Adrenal gland (tissue), 19 donors: ENCODE measurements at regions of chr3 and their contacts with region 1.

Region 1: DNA sequence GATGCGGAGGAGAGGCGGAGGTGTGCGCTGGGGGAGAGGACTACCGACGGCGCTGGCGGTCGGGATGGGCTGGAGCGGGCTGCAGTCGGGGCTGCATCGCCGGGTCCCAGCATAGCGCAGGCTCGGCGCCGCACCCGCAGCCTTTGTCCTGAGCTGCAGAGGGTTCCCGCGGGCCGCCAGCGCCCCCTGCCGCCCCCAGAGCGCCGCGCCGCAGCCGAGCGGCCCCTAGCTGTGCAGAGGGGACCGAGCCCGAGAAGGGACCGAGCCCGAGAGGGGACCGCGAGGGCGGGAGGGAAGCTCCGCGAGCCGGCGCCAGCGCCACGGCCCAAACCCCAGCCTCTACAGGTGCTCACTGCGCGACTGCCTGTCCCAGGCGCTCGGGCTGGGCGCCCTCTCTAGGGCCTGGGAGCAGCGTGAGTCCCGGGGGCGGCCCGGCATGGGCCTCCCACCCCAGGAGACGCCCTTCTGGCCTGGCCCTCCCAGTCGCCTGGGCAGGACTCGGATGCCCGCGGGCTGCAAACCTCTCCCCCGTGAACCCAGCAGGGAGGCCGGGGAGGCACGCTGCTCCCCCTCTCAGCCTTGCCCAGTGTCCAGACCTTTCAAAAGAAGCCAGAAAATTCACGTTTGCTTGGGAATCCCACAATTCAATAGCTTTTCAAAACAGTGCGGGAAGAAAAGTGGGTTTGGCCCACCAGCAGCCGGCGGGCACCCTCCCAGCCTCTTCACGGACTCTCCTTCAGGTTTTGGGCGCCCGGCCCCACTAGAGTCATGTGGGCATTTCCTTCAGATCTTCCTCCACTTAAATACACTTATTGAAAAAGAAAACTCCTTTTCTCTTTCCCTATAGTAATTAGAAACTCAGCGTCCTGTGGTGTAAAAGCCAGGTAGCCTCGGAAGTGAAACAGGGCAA is 134.7 kb downstream of the TPRA1 start:
- DNase-seq: peak; percentile 52 to 85 (median 74)
- H3K4me3 ChIP-seq: peak overlapping the region in 1 of 4 donors; percentile 29
- H3K27ac ChIP-seq: no peak overlapping the region
- H3K4me1 ChIP-seq: peaks cover 6 to 21% of the 10 kb centered on the region in 2 donors
- H3K27me3 ChIP-seq: peaks cover 37% of the 10 kb centered on the region
- CTCF ChIP-seq: peak; percentile 54 to 96 (median 83)
- POLR2A ChIP-seq: no peak

Region 2: GRCh38 chr3:126522363-126522788 is 933.4 kb before region 1 on chr3:
- intact Hi-C with region 1: loop called (anchors 10 kb)
- DNase-seq: peak; percentile 54 to 79 (median 59)
- H3K4me3 ChIP-seq: no peak overlapping the region
- H3K27ac ChIP-seq: no peak overlapping the region
- H3K4me1 ChIP-seq: peaks cover 7 to 14% of the 10 kb centered on the region in 2 donors
- H3K27me3 ChIP-seq: peaks cover 4% of the 10 kb centered on the region
- CTCF ChIP-seq: peak; percentile 81 to 99 (median 87)
- POLR2A ChIP-seq: no peak

Region 3: GRCh38 chr3:126679318-126679751 is 776.5 kb before region 1 on chr3:
- intact Hi-C with region 1: loop called (anchors 5 to 10 kb)
- DNase-seq: peak; percentile 75 to 95 (median 85)
- H3K4me3 ChIP-seq: no peak overlapping the region
- H3K27ac ChIP-seq: peak overlapping the region in 1 of 5 donors; percentile 52
- H3K4me1 ChIP-seq: peaks cover 0 to 18% of the 10 kb centered on the region in 2 donors
- H3K27me3 ChIP-seq: no peaks in the 10 kb centered on the region
- CTCF ChIP-seq: peak; percentile 74 to 96 (median 94)
- POLR2A ChIP-seq: no peak

Region 4: GRCh38 chr3:126752303-126752842 is 703.4 kb before region 1 on chr3:
- intact Hi-C with region 1: loop called in 1 of 2 experiments (anchors 2 kb)
- DNase-seq: peak; percentile 73 to 91 (median 77)
- H3K4me3 ChIP-seq: no peak overlapping the region
- H3K27ac ChIP-seq: no peak overlapping the region
- H3K4me1 ChIP-seq: peaks cover 0 to 6% of the 10 kb centered on the region in 2 donors
- H3K27me3 ChIP-seq: no peaks in the 10 kb centered on the region
- CTCF ChIP-seq: peak; percentile 78 to 92 (median 88)
- POLR2A ChIP-seq: no peak

Region 5: DNA sequence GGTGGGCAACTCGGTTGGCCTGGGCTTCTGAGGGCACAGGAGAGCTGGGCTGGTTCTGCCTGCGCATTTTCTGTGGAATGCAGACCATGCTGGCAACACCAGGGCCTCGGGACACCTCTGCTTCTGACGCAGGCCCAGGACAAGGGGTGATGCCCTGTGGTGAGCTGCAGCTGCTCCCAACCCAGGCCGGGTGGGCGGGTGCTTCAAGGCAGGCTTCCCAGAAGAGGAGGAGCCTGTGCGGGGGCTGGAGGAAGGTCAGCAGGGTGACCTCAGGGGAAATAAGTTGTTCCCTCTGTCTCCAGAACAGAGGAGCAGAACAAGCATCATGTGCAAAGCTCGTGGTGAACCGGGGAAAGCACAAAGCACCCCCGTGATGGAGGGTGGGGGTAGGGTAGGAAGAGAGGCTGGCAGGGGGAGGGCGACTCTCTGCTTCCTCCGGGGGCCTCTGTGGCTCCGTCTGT is 483.9 kb before region 1 on chr3:
- intact Hi-C with region 1: no loop called
- DNase-seq: peak; percentile 59 to 87 (median 77)
- H3K4me3 ChIP-seq: no peak overlapping the region
- H3K27ac ChIP-seq: peak overlapping the region in 3 of 5 donors; percentile 19 to 83 (median 76)
- H3K4me1 ChIP-seq: peaks cover 0 to 8% of the 10 kb centered on the region in 2 donors
- H3K27me3 ChIP-seq: no peaks in the 10 kb centered on the region
- CTCF ChIP-seq: no peak
- POLR2A ChIP-seq: no peak

Region 6: DNA sequence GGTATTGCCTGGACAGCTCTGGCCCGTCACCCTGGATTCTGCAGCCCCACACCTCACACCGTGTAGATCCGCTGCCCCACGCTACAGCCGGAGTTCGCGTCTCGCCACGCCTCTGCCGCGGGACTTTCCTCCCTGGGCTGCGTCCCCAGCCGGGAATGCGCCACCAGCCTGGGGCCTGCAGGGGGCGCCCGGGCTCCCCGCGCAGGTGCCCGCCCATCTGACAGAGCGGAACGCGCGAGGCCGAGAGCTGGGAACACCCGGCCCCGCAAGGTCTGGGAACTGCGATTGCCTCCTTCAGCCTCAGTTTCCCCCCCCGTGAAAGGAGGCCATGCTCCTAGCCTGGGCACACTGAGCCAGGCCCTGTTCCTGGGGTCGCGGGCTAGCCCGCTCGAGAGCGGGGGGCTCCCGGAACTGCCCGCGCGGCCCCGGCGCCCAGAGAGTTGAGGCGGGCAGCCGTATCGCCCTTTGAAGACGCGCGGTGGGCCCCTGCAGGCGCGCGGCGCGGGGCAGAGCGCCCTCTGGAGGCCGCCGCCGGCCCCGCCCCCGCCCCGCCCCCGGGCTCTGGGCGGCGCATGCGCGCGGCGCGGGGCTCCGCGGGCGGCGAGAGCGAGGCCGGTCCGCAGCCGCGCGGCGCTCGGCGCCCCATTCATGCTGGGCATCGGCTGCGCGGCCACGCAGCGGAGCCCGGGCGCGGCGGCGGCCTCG is 473.2 kb before region 1 on chr3 and contains the start of gene PLXNA1:
- intact Hi-C with region 1: loop called in 1 of 2 experiments (anchors 10 kb)
- DNase-seq: peak; percentile 64 to 83 (median 70)
- H3K4me3 ChIP-seq: peak within 1 kb of the TSS; percentile 37 to 98 (median 54)
- H3K27ac ChIP-seq: peak within 1 kb of the TSS in 4 of 5 donors; percentile 62 to 89 (median 74)
- H3K4me1 ChIP-seq: peaks cover 11 to 34% of the 10 kb centered on the region in 2 donors
- H3K27me3 ChIP-seq: no peaks in the 10 kb centered on the region
- CTCF ChIP-seq: peak; percentile 76 to 91 (median 86)
- POLR2A ChIP-seq: no peak
- total RNA-seq, gene PLXNA1: 9.5 to 28.4 (median 21.5) TPM

Region 7: DNA sequence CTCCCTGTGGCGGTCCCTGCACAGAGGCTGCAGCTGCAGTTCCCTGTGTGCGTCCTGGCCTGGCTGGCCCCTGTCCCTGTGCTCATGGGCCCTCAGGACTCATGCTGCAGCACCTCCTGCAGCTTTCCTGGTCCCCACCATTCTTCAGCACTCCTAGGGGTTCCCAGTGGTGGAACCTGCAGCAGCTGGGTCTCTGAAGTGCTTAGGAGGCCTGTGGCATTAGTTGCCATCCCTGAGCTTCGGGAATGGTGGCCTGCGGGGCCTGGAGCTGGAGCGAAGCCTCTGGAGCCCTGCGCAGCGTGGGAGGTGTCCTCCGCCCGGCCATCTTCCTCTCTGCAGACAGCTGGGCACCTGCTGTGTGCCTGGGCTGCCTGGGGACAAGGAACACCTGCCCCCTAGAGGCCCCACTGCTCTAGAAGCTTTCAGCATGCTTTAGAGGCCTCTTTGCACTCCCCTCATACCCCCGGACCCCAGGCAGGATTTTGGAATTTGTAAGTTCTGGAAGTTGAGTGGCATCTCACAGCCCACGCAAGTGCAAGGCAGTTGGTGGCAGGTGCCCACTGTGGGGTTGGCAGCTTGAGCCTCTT is 459.8 kb before region 1 on chr3:
- intact Hi-C with region 1: loop called in 1 of 2 experiments (anchors 10 kb)
- DNase-seq: no peak
- H3K4me3 ChIP-seq: no peak overlapping the region
- H3K27ac ChIP-seq: no peak overlapping the region
- H3K4me1 ChIP-seq: peaks cover 0 to 16% of the 10 kb centered on the region in 2 donors
- H3K27me3 ChIP-seq: no peaks in the 10 kb centered on the region
- CTCF ChIP-seq: no peak
- POLR2A ChIP-seq: no peak

Region 8: DNA sequence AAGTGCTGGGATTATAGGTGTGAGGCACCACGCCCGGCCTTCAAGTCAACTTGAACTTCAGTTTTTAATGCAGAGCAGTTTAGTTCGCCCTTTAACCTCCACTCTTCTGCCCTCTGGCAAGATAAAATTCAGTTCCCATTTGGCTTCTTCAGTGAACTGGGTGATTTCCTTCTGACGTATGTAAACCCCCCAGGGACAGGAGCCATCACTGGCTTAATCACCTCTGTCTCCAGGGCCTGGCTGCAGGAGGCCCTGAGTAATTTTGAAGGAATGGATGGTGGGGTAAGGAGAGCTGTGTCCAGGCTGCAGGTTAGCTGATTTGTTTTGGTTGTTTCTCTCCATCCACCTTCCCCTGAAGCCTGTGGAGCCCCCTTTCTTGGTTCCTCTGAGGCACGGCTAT is 154.3 kb after region 1 on chr3:
- intact Hi-C with region 1: no loop called
- DNase-seq: no peak
- H3K4me3 ChIP-seq: no peak overlapping the region
- H3K27ac ChIP-seq: no peak overlapping the region
- H3K4me1 ChIP-seq: peaks cover 5 to 9% of the 10 kb centered on the region in 2 donors
- H3K27me3 ChIP-seq: no peaks in the 10 kb centered on the region
- CTCF ChIP-seq: no peak
- POLR2A ChIP-seq: no peak